ENCODE measurements at regions of chr5 and their contacts with region 1.

Region 1: DNA sequence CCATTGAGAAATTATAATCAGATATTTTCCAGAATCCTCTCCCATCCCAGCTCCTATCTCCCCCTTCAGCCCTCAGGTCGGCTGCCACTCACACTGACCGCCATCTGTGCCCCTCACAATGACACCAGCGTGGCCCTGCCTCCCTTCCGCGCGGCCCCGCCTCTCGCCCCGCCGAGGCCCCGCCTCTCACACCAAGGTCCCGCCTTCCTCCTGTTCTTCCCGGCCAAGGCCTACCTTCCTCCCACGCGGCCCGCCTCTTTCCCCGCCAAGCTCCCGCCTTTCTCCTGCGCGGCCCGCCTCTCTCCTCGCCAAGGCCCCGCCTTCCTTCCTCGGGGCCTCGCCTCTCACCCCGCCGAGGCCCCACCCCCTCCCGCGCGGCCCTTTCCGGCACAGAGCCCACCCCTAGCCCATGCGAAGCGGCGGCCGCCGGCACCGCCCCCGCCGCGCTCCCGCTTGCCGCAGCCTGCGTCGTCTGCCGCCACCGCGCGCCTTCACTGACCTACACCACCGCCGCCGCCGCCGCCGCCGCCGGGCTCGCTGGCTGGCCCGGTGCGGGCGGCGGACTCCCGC is at the start of gene DNAJC21:
- DNase-seq: peak; percentile 92 to 100
- H3K4me3 ChIP-seq: peak within 1 kb of the TSS; percentile 64
- H3K27ac ChIP-seq: peak within 1 kb of the TSS; percentile 70
- H3K4me1 ChIP-seq: peaks cover 31% of the 10 kb centered on the region
- H3K27me3 ChIP-seq: no peaks in the 10 kb centered on the region
- CTCF ChIP-seq: no peak
- total RNA-seq, gene DNAJC21: 111 and 128 TPM in 2 replicates

Region 2: DNA sequence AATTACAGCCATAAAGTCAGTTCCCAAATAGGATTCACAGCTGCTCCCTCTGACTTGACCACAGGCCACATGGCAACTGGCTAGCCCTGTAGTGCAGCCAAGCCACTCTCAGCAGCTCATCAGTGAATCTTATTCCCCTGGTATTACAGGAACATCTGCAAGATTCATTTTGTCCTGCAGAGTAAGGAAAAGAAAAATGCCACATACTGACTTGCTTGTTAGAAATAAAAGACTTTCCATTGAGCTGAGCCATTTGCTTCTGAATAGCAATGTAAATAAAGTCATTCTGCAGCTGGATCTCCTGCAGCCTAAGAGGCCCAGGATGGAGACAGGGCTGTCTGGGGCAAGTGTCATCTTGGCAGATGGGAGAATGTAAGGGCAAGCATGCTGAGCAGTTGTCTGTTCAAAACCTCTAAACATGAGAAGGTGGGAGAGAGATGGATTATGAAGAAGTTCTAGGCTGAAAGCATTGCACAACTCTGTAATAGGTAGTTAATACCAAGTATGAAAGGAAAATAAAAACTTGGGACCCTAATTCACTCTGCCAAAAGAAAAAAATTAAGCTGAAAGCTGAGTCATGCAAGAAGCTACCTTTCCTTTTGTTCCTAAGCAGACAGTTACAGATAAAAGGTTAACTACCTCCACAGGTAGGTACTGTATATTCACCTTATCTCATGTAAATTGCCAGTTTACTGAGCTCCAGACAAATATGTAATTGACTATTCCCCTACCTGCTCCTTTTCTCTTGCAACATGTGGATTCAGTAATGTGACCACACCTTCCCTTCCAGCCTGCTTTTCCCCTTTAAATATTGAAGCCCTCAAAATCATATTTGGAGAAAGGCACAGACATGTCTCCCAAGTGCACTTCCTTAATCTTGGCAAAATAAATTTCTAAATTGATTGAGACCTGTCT is 517.5 kb before region 1 on chr5:
- CTCF ChIA-PET with region 1: no interaction called
- POLR2A ChIA-PET with region 1: interaction called, 19 read pairs
- intact Hi-C with region 1: no loop called
- DNase-seq: no peak
- H3K4me3 ChIP-seq: no peak overlapping the region
- H3K27ac ChIP-seq: no peak overlapping the region
- H3K4me1 ChIP-seq: peaks cover 14% of the 10 kb centered on the region; the same call in 1 of the 2 replicates
- H3K27me3 ChIP-seq: no peaks in the 10 kb centered on the region
- CTCF ChIP-seq: no peak

Region 3: DNA sequence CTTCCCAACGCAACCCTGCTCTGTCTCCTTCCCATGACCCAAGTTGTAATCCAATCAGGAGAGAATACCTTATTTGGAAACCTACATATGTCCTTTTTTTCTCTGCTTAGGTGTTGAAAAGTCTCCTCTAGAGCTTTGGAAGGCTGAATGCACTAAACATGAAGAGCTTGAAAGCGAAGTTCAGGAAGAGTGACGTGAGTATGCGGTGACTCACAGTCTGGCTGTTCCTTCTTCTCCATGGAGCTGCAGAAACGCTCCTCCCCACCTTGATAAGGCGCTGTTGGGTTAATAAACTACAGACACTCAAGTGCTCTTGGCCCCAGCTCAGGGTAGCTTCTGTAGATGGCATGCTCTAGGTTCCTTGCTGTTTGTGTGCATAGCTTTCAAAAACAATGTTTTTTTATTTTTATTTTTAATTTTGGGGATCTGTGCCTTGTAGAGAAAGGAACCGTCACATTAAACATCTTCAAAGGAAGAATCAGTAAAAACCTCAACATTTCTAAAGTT is 242.4 kb before region 1 on chr5:
- CTCF ChIA-PET with region 1: no interaction called
- POLR2A ChIA-PET with region 1: interaction called, 7 read pairs
- intact Hi-C with region 1: loop called (anchors 5 kb)
- DNase-seq: peak; percentile 88 to 90
- H3K4me3 ChIP-seq: no peak overlapping the region
- H3K27ac ChIP-seq: peak overlapping the region; percentile 34
- H3K4me1 ChIP-seq: peaks cover 58% of the 10 kb centered on the region
- H3K27me3 ChIP-seq: no peaks in the 10 kb centered on the region
- CTCF ChIP-seq: no peak

Region 4: DNA sequence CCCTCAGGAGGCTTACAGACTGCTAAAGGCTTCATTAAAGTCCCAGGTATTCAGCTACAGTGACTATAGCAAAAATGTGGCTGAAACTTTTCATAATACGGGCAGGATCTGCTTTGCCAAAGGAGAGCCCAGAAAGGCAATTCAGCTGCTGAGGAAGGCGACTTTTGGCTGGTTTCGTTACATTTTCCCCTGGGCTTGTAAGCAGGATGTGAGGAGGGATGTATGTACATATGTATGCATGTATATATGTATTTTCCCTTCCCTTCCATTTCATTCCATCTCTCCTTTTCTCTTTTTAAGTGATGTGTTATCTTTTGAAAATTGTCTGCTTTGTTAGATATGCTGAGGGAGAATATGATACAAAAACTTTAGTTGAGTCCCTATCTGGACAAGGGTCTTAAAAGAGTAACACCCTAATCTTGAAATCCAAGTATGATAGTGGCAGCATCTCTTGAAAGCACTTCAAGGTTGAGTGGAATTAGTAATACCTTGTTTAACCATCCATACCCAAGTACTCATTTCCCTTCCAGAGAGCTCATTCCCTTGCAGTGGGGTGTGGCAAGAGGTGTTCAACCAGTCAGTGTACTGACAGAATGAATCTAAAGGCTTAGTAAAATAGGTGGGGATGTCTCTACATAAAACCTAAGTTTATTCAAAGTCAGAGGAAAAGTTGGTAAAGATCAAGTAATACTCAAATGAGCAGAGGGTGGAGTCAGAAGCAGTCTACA is 42.7 kb before region 1 on chr5:
- CTCF ChIA-PET with region 1: no interaction called
- POLR2A ChIA-PET with region 1: interaction called, 27 read pairs
- intact Hi-C with region 1: no loop called
- DNase-seq: no peak
- H3K4me3 ChIP-seq: no peak overlapping the region
- H3K27ac ChIP-seq: no peak overlapping the region
- H3K4me1 ChIP-seq: no peaks in the 10 kb centered on the region
- H3K27me3 ChIP-seq: no peaks in the 10 kb centered on the region
- CTCF ChIP-seq: no peak

Region 5: DNA sequence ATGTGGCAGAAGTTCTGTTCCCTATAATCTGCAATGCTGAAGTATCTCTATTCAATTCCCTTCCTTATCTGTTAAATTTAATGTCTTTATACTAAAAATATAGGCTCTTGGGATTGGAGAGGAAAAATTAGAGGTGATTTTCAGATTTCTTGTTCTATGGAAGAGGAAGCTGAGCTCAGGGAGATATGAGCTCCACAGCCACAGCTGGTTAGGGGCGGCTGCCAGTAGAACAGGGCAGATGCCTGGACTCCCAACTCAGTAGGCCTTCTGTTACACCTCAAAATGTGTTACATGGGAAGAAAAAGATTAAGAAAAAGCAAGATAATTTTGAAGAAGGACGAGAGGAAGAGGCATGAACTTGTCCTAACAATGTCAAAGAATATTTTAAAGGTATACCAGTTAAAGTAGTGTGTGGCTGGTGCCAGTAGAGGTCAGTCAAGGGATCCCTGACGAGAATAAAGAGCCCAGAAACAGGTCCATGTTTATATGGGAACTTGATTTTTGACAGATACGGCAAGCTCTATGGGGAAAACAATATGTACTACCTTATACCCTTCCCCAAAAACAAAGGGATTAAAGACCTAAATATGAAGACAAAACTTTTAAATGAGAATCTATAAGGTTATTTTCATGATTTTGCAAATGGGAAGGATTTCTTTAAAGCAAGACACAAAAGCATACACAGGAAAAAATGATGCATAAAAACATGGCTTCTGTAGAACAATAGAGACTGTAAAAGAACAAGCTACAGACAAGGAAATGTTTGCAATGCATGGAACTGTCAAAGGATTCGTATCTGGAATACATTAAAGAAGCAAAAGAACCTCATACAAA is 28.8 kb after region 1 on chr5:
- CTCF ChIA-PET with region 1: interaction called, 4 read pairs
- POLR2A ChIA-PET with region 1: interaction called, 11 read pairs
- intact Hi-C with region 1: no loop called
- DNase-seq: no peak
- H3K4me3 ChIP-seq: no peak overlapping the region
- H3K27ac ChIP-seq: no peak overlapping the region
- H3K4me1 ChIP-seq: peaks cover 15% of the 10 kb centered on the region
- H3K27me3 ChIP-seq: no peaks in the 10 kb centered on the region
- CTCF ChIP-seq: peak; percentile 67; the same call in 1 of the 2 replicates